ENCODE measurements at regions of chr16 and their contacts with region 1.

Region 1: DNA sequence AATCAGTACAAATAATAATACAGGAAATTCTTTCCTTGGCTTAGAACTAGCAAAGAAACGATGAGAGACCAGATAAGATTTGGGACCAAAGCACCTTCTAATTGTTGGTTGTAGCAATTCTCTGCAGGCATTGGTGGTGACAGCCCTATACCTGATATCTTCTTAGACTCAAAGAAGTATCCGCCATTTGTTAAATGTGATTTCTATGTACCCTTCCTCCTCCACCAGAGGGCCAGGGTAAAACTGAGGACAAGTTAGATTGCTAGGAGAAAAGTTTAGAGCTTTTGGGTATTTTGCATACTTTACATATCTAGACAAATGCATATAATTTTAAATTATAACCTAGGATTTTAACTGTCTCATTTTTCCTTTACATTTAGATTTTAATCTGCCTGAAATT is 304.3 kb downstream of the HS3ST4 start:
- DNase-seq: no peak
- ATAC-seq: no peak
- H3K4me3 ChIP-seq: no peak overlapping the region
- H3K27ac ChIP-seq: no peak overlapping the region
- H3K4me1 ChIP-seq: no peaks in the 10 kb centered on the region
- H3K27me3 ChIP-seq: no peaks in the 10 kb centered on the region

Region 2: DNA sequence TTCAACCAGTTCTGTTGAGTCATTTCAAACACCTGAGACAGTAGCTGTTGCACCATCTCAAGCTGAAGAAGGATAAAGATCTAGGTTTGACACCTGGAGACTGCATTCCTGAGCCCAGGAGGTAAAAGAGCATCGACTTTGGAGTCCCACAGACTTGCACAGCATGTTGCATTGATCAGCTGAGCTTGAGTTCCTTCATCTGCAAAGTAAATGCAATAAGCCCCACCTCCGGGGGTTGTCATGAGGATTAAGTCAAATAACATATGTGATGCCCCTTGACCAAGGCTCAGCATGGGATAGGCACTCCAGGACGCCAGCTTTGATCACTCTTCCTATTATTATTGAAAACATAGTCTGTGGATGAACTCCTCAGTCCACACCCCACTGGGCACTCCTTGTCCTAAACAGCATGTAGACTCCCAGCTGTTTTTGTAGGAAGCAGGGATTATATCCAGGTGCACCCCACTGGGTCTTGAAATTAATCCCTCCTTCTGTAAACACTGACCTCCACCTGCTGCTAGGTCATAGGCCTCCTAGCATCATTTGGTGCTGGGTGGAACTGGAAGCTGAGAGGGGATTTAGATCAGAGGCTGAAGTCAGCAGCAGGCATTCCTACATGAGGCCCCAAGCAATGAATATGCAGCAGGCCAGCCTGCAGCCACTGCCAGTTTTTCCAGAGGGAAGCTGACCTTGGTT is 45.3 kb before region 1 on chr16:
- intact Hi-C with region 1: loop called in 1 of 2 experiments (anchors 5 kb)
- DNase-seq: no peak
- ATAC-seq: no peak
- H3K4me3 ChIP-seq: no peak overlapping the region
- H3K27ac ChIP-seq: no peak overlapping the region
- H3K4me1 ChIP-seq: no peaks in the 10 kb centered on the region
- H3K27me3 ChIP-seq: no peaks in the 10 kb centered on the region